Activated CD4-positive, alpha-beta T cell treated with anti-CD3 and anti-CD28 coated beads for 36 hours (primary cell): ENCODE measurements at regions of chr9 and their contacts with region 1.

Region 1: GRCh38 chr9:116494815-116495634 is 192.1 kb upstream of the TRIM32 start:
- DNase-seq: peak; percentile 62
- ATAC-seq: no peak
- H3K4me3 Mint-ChIP-seq: no peak overlapping the region
- H3K27ac Mint-ChIP-seq: no peak overlapping the region
- H3K4me1 Mint-ChIP-seq: no peaks in the 10 kb centered on the region
- H3K27me3 Mint-ChIP-seq: no peaks in the 10 kb centered on the region

Region 2: DNA sequence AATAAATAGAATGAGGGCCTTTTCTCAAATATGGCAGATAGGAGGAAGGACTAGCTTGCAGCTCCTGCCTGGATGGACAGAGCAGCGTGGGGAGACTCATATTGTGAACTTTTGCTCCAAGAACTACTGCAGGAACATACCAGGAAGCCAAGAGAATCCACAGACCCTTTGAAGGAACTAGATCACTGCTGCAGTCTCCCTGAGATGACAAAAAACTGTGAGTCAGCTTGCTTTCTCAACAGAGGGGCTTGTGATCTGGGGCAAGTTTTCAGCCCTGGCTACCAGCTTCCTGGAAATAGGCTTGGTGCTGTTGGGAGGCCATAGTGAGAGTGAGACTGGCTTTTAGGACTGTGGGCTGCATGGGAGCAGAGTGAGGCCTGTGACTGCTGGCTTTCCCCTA is 21.4 kb after region 1 on chr9:
- CTCF ChIA-PET with region 1: no interaction called
- POLR2A ChIA-PET with region 1: no interaction called
- intact Hi-C with region 1: no loop called
- DNase-seq: no peak
- ATAC-seq: no peak
- H3K4me3 Mint-ChIP-seq: no peak overlapping the region
- H3K27ac Mint-ChIP-seq: no peak overlapping the region
- H3K4me1 Mint-ChIP-seq: no peaks in the 10 kb centered on the region
- H3K27me3 Mint-ChIP-seq: no peaks in the 10 kb centered on the region

Region 3: GRCh38 chr9:116661037-116661954 is 166.3 kb after region 1 on chr9:
- CTCF ChIA-PET with region 1: interaction called, 3 read pairs
- POLR2A ChIA-PET with region 1: no interaction called
- intact Hi-C with region 1: loop called (anchors 10 kb)
- DNase-seq: no peak
- ATAC-seq: peak; percentile 58
- H3K4me3 Mint-ChIP-seq: no peak overlapping the region
- H3K27ac Mint-ChIP-seq: no peak overlapping the region
- H3K4me1 Mint-ChIP-seq: no peaks in the 10 kb centered on the region
- H3K27me3 Mint-ChIP-seq: no peaks in the 10 kb centered on the region